ENCODE measurements at regions of chr3 and their contacts with region 1.

Region 1: GRCh38 chr3:38453075-38453912 is at the start of gene ACVR2B:
- DNase-seq: peak; percentile 92
- H3K4me3 ChIP-seq: peak within 1 kb of the TSS; percentile 57 to 72 (median 65)
- H3K27ac ChIP-seq: peak within 1 kb of the TSS; percentile 88 to 94 (median 92)
- H3K4me1 ChIP-seq: peaks cover 7 to 37% (median 24%) of the 10 kb centered on the region in 4 donors
- H3K27me3 ChIP-seq: no peaks in the 10 kb centered on the region
- CTCF ChIP-seq: no peak
- EP300 ChIP-seq: no peak
- POLR2A ChIP-seq: peak; percentile 12
- total RNA-seq, gene ACVR2B: 5.9 to 12.3 (median 8.7) TPM

Region 2: GRCh38 chr3:38136777-38137614 is 316.3 kb before region 1 on chr3 and contains the start of gene ACAA1:
- in situ Hi-C with region 1: loop called in 1 of 4 experiments (anchors 25 kb)
- intact Hi-C with region 1: no loop called
- DNase-seq: peak; percentile 100
- H3K4me3 ChIP-seq: peak within 1 kb of the TSS; percentile 62 to 99 (median 89)
- H3K27ac ChIP-seq: peak within 1 kb of the TSS; percentile 92 to 97 (median 95)
- H3K4me1 ChIP-seq: peaks cover 35 to 61% (median 52%) of the 10 kb centered on the region in 4 donors
- H3K27me3 ChIP-seq: no peaks in the 10 kb centered on the region
- CTCF ChIP-seq: no peak
- EP300 ChIP-seq: no peak
- POLR2A ChIP-seq: peak; percentile 97
- total RNA-seq, gene ACAA1: 123 to 278 (median 204) TPM

Region 3: DNA sequence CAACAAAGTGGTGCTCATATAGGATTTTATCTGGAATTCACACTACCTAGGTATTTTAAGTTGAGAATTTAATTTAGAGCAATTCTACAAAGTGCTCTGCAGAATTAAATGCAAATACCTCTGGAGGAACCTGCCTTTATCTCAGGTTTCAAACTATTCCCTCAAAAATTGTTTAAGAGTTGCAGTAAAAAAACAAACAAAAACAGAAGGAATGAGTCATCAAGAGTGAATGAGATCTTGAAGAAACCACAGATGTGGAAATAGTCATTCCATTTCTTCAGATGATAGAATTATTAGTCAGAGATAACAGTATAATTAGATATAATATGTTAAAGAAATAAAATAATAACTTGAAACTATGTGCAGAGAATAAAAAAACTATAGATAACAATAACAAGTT is 277.0 kb after region 1 on chr3:
- in situ Hi-C with region 1: no loop called
- intact Hi-C with region 1: no loop called
- DNase-seq: no peak
- H3K4me3 ChIP-seq: no peak overlapping the region
- H3K27ac ChIP-seq: no peak overlapping the region
- H3K4me1 ChIP-seq: no peaks in the 10 kb centered on the region
- H3K27me3 ChIP-seq: no peaks in the 10 kb centered on the region
- CTCF ChIP-seq: no peak
- EP300 ChIP-seq: no peak
- POLR2A ChIP-seq: no peak

Region 4: DNA sequence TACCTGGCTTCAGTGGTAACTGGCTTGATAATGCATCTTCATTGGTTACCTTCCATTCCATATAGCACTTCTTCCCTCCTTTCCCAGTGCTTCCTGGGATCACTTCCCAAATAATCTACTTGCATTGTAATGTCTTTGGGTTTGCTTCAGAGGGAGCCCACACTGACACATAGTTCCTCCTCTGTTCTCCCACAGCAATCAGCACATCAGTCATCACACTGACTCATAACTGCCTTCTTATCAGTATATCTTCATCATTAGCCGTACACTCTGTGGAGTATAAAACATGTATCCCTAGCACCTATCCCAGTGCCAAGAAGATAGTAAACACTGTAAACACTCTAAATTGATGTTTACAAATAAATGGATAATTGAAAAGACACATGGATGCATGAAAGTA is 454.1 kb after region 1 on chr3:
- in situ Hi-C with region 1: no loop called
- intact Hi-C with region 1: no loop called
- DNase-seq: no peak
- H3K4me3 ChIP-seq: no peak overlapping the region
- H3K27ac ChIP-seq: no peak overlapping the region
- H3K4me1 ChIP-seq: no peaks in the 10 kb centered on the region
- H3K27me3 ChIP-seq: no peaks in the 10 kb centered on the region
- CTCF ChIP-seq: no peak
- EP300 ChIP-seq: no peak
- POLR2A ChIP-seq: no peak